ENCODE measurements at regions of chr1 and their contacts with region 1.

Region 1: DNA sequence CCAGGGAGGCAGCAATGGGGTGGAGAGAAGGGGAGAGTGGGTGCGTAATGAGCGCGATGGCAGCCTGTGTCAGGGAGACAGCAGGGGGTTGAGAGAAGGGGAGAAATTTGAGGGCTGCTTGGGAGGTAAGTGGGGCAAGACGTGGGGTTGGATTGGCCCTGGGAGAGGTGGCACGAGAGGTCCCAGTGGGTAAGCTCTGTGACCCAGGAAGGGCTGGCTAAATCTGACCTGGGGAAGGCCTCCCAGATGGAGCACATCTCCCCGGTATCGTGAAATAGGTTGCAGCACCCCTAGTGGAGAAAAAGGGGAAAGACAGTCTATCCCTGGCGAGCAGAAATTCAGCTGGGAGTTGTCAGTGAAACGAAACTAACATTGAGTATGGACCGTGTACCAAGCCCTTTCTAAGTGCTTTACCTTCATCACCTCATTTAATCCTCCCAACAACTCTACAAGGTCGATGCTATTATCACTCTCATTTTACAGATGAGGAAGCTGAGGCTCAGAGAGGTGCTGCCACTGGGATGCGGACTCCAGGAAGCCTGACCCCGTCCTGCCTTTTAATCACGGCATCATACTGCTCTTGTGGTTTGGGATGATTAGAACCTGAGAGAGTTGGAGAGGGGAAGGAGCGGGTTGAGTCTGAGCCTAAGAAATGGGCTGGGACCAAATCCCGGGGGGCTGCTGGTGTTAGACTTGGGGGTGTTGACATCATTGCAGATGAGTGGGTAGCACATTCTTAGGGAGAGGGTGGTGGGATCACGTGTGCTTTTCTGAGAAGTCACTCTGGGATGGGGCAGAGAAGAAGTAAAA is 56.6 kb upstream of the RPL11 start:
- DNase-seq: peak; percentile 51 to 65
- H3K4me3 ChIP-seq: no peak overlapping the region
- H3K4me3 Mint-ChIP-seq: no peak overlapping the region
- H3K27ac Mint-ChIP-seq: no peak overlapping the region
- H3K4me1 ChIP-seq: no peaks in the 10 kb centered on the region
- H3K4me1 Mint-ChIP-seq: peaks cover 8% of the 10 kb centered on the region
- H3K27me3 ChIP-seq: no peaks in the 10 kb centered on the region
- H3K27me3 Mint-ChIP-seq: peaks cover 3% of the 10 kb centered on the region
- CTCF ChIP-seq: peak; percentile 75 to 81

Region 2: GRCh38 chr1:23539698-23540266 is 95.3 kb before region 1 on chr1:
- CTCF ChIA-PET with region 1: interaction called, 48 read pairs
- POLR2A ChIA-PET with region 1: no interaction called
- intact Hi-C with region 1: loop called (anchors 1 kb)
- DNase-seq: peak; percentile 92
- H3K4me3 ChIP-seq: no peak overlapping the region
- H3K4me3 Mint-ChIP-seq: peak overlapping the region; percentile 44
- H3K27ac Mint-ChIP-seq: no peak overlapping the region
- H3K4me1 ChIP-seq: no peaks in the 10 kb centered on the region
- H3K4me1 Mint-ChIP-seq: no peaks in the 10 kb centered on the region
- H3K27me3 ChIP-seq: no peaks in the 10 kb centered on the region
- H3K27me3 Mint-ChIP-seq: no peaks in the 10 kb centered on the region
- CTCF ChIP-seq: peak; percentile 76 to 86

Region 3: GRCh38 chr1:23559136-23559984 is 75.7 kb before region 1 on chr1 and contains the start of gene ID3:
- CTCF ChIA-PET with region 1: interaction called, 20 read pairs
- POLR2A ChIA-PET with region 1: interaction called, 7 read pairs
- intact Hi-C with region 1: no loop called
- DNase-seq: peak; percentile 92 to 94
- H3K4me3 ChIP-seq: peak within 1 kb of the TSS; percentile 68
- H3K4me3 Mint-ChIP-seq: peak within 1 kb of the TSS; percentile 87
- H3K27ac Mint-ChIP-seq: peak within 1 kb of the TSS; percentile 97
- H3K4me1 ChIP-seq: peaks cover 71% of the 10 kb centered on the region
- H3K4me1 Mint-ChIP-seq: peaks cover 46% of the 10 kb centered on the region
- H3K27me3 ChIP-seq: no peaks in the 10 kb centered on the region
- H3K27me3 Mint-ChIP-seq: no peaks in the 10 kb centered on the region
- CTCF ChIP-seq: no peak
- total RNA-seq, gene ID3: 13.7 and 18.0 TPM in 2 replicates

Region 4: GRCh38 chr1:23704834-23705495 is 69.9 kb after region 1 on chr1:
- CTCF ChIA-PET with region 1: no interaction called
- POLR2A ChIA-PET with region 1: no interaction called
- intact Hi-C with region 1: no loop called
- DNase-seq: peak in 1 of 2 experiments; percentile 49
- H3K4me3 ChIP-seq: no peak overlapping the region
- H3K4me3 Mint-ChIP-seq: peak overlapping the region; percentile 33
- H3K27ac Mint-ChIP-seq: peak overlapping the region; percentile 79
- H3K4me1 ChIP-seq: peaks cover 17% of the 10 kb centered on the region
- H3K4me1 Mint-ChIP-seq: peaks cover 7% of the 10 kb centered on the region
- H3K27me3 ChIP-seq: no peaks in the 10 kb centered on the region
- H3K27me3 Mint-ChIP-seq: no peaks in the 10 kb centered on the region
- CTCF ChIP-seq: no peak

Region 5: GRCh38 chr1:24094554-24094953 is 459.5 kb after region 1 on chr1:
- CTCF ChIA-PET with region 1: no interaction called
- POLR2A ChIA-PET with region 1: no interaction called
- intact Hi-C with region 1: no loop called
- DNase-seq: no peak
- H3K4me3 ChIP-seq: no peak overlapping the region
- H3K4me3 Mint-ChIP-seq: no peak overlapping the region
- H3K27ac Mint-ChIP-seq: no peak overlapping the region
- H3K4me1 ChIP-seq: no peaks in the 10 kb centered on the region
- H3K4me1 Mint-ChIP-seq: no peaks in the 10 kb centered on the region
- H3K27me3 ChIP-seq: no peaks in the 10 kb centered on the region
- H3K27me3 Mint-ChIP-seq: no peaks in the 10 kb centered on the region
- CTCF ChIP-seq: no peak

Measured in Caco-2 (cell line).